GM18951 (cell line): ENCODE measurements at regions of chr21 and their contacts with region 1.

Region 1: GRCh38 chr21:45140346-45140940 is 66.1 kb downstream of the ADARB1 start:
- POLR2A ChIP-seq: no peak

Region 2: DNA sequence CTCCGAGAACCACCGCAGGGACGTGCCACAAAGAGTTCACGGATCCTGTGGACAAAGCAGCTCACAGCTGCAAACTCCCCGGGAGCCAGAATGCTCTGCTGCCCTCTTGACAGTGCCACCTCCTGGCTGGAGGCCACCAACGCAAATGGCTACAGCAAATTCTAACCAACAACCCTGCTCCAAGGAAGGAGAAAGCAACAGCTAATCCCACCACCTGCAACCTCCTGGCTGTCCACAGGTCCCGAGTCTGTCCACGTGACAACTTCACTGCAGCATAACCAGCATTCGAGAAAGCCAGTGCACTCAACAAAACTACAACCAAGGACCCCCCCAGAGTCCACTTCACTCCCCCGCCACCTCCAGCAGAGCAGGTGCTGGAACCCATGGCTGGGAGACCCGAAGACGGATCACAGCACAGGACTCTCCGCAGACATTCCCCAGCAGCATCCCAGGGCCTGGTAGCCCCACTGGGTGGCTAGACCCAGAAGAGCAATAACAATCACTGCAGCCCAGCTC is 129.9 kb after region 1 on chr21:
- in situ Hi-C with region 1: no loop called
- POLR2A ChIP-seq: no peak

Region 3: GRCh38 chr21:45287438-45288391 is 147.3 kb after region 1 on chr21 and contains the start of gene POFUT2:
- in situ Hi-C with region 1: no loop called
- POLR2A ChIP-seq: peak; percentile 76

Region 4: DNA sequence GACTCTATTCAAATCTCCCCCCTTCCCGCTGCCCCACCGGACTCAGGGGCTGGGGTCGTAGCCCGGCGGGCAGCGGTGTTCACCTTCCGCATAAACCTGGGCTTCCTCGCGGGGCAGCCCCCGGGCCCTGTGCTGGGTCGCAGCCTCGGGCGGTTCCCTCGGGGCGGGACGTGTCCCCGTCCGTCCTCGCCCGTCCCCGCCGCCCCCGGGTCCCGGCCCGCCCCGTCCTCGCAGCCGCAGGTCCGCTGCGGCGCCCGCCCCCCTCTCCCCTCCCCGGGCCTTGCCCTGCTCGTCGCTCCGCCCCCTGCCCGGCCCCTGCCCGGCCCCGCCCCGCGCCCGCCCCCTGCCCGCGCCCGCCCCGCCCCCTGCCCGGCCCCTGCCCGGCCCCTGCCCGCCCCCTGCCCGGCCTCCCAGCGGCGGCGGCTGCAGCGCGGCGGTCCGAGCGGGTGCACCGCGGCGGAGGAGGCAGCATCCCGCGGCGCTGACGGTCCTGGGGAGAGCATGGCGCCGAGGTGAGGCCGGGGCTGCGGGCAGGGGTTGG is 264.4 kb after region 1 on chr21 and contains the start of gene COL18A1:
- in situ Hi-C with region 1: loop called (anchors 25 kb)
- POLR2A ChIP-seq: no peak